ENCODE measurements at regions of chr11 and their contacts with region 1.

Region 1: DNA sequence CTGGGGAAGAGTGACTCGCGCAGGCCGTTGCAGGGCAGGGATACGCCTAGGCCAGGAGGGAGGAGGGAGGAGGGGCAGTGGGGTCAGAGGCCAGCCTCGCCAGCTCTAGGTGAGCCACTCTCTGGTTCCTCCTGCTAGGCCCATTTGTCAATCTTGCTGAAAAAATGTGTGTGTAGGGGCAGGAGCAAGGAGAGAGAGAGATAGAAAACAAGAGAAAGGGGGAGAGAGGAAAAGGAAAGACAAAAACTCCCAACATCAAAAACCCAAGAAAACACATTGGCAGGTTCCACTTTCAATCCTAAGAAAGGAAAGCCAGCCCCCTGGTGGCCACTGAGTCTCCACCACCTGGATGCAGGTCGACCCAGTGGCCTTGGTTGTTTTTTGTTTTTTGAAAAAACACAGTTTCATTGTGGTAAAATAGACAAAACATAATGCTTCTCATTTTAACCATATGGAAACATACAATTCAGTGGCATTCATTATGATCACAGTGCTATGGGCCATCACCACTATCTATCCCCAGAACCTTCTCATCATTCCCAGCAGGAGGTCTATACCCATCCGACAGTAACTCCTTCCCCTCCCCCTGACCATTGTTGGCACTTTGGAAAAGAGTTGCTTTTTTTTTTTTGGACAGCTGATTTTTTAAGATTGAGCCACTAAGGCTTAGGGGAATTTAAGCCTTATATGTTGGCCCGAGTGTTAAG is 10.9 kb downstream of the OMP start:
- DNase-seq: peak; percentile 15 to 26
- ATAC-seq: no peak
- H3K4me3 ChIP-seq: no peak overlapping the region
- H3K27ac ChIP-seq: no peak overlapping the region
- H3K4me1 ChIP-seq: no peaks in the 10 kb centered on the region
- H3K27me3 ChIP-seq: no peaks in the 10 kb centered on the region
- CTCF ChIP-seq: peak; percentile 42

Region 2: DNA sequence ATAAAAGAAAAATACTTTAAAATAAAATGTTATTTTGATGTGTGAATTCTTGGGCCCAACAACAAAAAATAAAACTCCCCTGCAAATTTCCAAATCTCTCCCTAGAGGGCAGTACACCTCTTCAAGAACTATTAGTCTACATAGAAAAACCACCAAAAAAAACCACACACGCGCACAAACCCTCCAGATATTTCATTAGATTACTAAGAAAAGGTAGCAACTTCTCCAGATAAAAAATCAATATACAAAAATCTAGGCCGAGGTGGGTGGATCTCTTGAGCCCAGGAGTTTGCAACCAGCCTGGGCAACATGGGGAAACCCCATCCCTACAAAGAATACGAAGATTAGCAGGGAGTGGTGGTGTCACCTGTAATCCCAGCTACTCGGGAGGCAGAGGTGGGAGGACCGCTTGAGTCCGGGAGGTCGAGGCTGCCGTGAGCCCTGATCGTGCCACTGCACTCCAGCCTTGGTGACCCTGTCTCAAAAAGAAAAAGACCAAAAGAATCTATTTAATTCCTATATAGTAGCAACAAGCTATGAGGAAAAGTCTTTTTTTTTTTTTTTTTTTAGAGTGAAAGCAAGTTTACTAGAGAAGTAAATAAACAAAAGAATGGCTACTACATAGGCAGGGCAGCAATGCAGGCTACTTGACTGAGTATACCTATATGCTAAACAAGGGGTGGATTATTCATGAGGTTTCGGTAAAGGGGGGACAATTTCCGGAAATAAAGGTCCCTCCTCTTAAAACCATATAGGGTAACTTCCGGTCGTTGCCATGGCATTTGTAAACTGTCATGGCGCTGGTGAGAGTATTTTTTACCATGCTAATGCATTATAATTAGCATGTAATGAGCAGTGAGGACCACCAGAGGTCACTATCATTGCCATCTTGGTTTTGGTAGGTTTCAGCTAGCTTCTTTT is 66.3 kb before region 1 on chr11:
- intact Hi-C with region 1: no loop called
- DNase-seq: peak in 1 of 2 donors; percentile 45
- ATAC-seq: peak; percentile 87 to 97 (median 94)
- H3K4me3 ChIP-seq: peak overlapping the region; percentile 56
- H3K27ac ChIP-seq: no peak overlapping the region
- H3K4me1 ChIP-seq: no peaks in the 10 kb centered on the region
- H3K27me3 ChIP-seq: peaks cover 0 to 31% (median 3%) of the 10 kb centered on the region in 3 donors
- CTCF ChIP-seq: peak; percentile 72

Region 3: GRCh38 chr11:77073328-77074001 is 40.1 kb before region 1 on chr11:
- intact Hi-C with region 1: no loop called
- DNase-seq: peak; percentile 88 to 90
- ATAC-seq: peak; percentile 86 to 89 (median 88)
- H3K4me3 ChIP-seq: no peak overlapping the region
- H3K27ac ChIP-seq: peak overlapping the region; percentile 60
- H3K4me1 ChIP-seq: no peaks in the 10 kb centered on the region
- H3K27me3 ChIP-seq: no peaks in the 10 kb centered on the region
- CTCF ChIP-seq: peak; percentile 13

Region 4: DNA sequence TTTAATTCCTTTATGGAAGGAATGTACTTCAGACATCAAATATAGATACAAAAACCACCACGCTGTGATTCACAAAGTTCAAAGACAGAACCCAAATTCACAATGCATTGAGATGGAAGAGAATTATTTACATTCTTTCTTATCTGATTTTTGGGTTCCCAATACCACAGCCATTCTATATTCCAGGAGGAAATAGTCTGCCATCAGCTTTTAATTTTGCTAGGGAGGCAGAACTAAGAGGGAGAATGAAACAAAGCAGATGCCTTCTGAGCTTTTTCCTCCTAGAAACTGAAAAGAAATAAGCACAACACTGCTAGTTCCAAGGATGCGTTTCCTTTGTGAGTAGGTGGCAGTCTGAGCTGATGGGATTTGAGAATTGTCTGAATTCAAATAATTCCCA is 1744.2 kb after region 1 on chr11:
- intact Hi-C with region 1: loop called in 1 of 2 experiments (anchors 5 kb)
- DNase-seq: no peak
- ATAC-seq: no peak
- H3K4me3 ChIP-seq: no peak overlapping the region
- H3K27ac ChIP-seq: no peak overlapping the region
- H3K4me1 ChIP-seq: no peaks in the 10 kb centered on the region
- H3K27me3 ChIP-seq: no peaks in the 10 kb centered on the region
- CTCF ChIP-seq: no peak

Measured in psoas muscle (tissue), 8 donors.